ENCODE measurements at regions of chr10 and their contacts with region 1.

Region 1: DNA sequence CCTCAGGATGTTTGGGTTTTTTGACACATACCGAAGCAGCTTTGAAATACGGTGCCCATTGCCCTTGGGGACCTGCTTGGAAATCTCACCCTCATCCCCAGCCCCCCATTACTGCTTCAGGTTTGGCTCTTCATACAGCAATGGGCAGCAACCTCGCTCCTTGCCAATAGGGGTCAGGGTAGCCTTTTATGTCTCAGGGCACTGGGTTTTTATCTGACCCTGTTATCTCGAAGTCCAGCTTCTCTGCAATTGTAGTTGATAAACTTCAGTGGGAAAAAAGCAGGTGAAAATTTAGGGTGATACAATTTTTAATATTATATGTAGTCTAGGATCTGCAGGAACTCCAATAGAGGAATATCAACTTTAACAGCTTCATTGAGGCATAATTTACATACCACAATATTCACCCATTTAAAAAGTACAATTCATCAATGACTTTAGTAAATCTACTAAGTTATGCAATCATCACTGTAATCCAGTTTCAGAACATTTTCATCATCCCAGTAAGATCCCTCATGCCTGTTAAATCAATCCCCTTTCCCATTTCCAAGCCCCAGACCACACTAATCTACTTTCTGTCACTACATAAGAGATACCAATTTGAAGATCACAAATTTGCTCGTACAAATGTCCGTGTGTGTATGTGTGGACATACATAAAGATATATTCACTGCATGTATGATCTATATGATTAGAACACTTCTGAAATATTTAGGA is 386.2 kb downstream of the KCNMA1 start:
- DNase-seq: peak; percentile 58
- H3K4me3 ChIP-seq: no peak overlapping the region; a peak in 1 of 4 replicates
- H3K27ac ChIP-seq: no peak overlapping the region
- H3K4me1 ChIP-seq: peaks cover 12 to 16% of the 10 kb centered on the region in 2 experiments; a peak in 3 of 4 replicates
- H3K27me3 ChIP-seq: no peaks in the 10 kb centered on the region
- CTCF ChIP-seq: peak; percentile 86
- EP300 ChIP-seq: no peak
- RAD21 ChIP-seq: peak; percentile 93

Region 2: DNA sequence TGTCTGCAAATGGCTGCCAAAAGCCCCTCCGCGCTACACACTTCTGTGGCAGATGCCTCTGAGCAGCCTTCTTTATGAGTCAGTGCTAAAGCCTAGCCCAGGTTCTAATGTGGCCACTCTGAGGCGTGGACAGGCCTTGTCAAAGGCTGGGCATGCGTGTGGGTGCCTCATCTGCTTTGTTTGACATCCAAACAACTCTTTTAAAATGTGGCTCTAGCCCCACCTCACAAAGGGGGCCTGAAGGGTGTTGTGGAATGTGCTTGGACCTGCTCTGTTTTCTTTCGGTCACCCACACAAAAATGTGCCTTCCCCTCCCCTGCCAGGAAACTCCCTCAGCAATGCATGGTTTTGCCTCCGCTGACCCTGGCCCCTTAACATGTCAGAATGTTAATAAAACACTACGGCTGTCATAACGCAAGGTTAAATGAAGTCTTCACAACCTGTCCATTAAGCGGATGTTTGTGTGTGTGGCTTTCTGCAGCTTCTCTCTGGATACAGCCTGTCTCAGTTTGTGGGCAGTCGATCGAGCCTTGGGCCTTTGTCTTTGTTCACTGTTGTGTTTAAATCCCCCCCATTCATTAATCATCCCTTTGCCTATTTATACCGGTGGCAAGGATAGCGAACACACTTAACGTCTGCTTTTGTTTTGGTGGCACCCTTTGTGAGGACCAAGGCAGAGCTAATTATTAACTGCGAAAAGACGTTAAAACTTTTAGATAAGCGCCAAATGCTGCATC is 1101.1 kb before region 1 on chr10:
- CTCF ChIA-PET with region 1: no interaction called
- POLR2A ChIA-PET with region 1: no interaction called
- DNase-seq: no peak
- H3K4me3 ChIP-seq: no peak overlapping the region
- H3K27ac ChIP-seq: no peak overlapping the region
- H3K4me1 ChIP-seq: no peaks in the 10 kb centered on the region; a peak in 1 of 4 replicates
- H3K27me3 ChIP-seq: no peaks in the 10 kb centered on the region
- CTCF ChIP-seq: no peak
- EP300 ChIP-seq: no peak
- RAD21 ChIP-seq: no peak

Region 3: GRCh38 chr10:77165445-77166208 is 85.8 kb before region 1 on chr10:
- CTCF ChIA-PET with region 1: interaction called, 25 read pairs
- POLR2A ChIA-PET with region 1: no interaction called
- DNase-seq: peak; percentile 54
- H3K4me3 ChIP-seq: peak overlapping the region in 1 of 2 experiments; percentile 3; a peak in 1 of 4 replicates
- H3K27ac ChIP-seq: peak overlapping the region in 1 of 2 experiments; percentile 96; a peak in 1 of 4 replicates
- H3K4me1 ChIP-seq: peaks cover 25 to 29% of the 10 kb centered on the region in 2 experiments
- H3K27me3 ChIP-seq: no peaks in the 10 kb centered on the region
- CTCF ChIP-seq: peak; percentile 79
- EP300 ChIP-seq: no peak
- RAD21 ChIP-seq: peak; percentile 90

Region 4: GRCh38 chr10:77240041-77240652 is 11.3 kb before region 1 on chr10:
- CTCF ChIA-PET with region 1: interaction called, 38 read pairs
- POLR2A ChIA-PET with region 1: no interaction called
- DNase-seq: no peak
- H3K4me3 ChIP-seq: no peak overlapping the region
- H3K27ac ChIP-seq: peak overlapping the region in 1 of 2 experiments; percentile 60; a peak in 2 of 4 replicates
- H3K4me1 ChIP-seq: peaks cover 19 to 20% of the 10 kb centered on the region in 2 experiments; a peak in 3 of 4 replicates
- H3K27me3 ChIP-seq: no peaks in the 10 kb centered on the region
- CTCF ChIP-seq: no peak
- EP300 ChIP-seq: no peak
- RAD21 ChIP-seq: no peak

Region 5: DNA sequence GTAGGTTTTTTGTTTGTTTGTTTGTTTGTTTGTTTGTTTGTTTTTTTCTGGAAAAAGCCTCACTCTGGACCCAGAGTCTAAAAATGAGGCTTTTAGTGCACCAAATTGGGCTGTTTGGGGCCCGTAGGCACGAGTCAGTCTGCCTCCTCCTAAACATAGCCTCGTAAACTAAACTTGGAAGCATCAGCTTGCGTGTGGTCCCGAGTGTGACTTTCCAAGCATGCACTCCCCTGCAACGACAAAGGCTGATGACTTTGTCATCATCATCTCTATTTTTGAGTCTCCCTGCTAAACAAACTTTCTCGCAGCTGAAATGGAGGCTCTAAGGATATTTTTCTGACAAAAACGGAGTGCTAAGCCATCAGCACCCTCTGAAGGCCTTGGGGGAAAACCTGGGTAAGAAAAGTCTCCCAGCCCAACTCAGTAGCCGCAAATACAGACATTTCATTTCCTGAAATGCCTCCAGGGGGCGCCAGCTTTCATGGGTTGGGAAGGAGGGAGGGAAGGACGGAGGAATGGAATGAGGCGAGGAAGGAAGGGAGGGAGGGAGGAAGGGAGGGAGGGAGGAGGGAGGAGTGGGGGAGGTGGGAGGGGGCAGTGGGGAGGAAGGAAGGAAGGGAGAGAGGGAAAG is 140.3 kb after region 1 on chr10:
- CTCF ChIA-PET with region 1: interaction called, 16 read pairs
- POLR2A ChIA-PET with region 1: no interaction called
- DNase-seq: peak; percentile 66
- H3K4me3 ChIP-seq: no peak overlapping the region
- H3K27ac ChIP-seq: peak overlapping the region; percentile 78 to 95
- H3K4me1 ChIP-seq: peaks cover 49 to 57% of the 10 kb centered on the region in 2 experiments
- H3K27me3 ChIP-seq: no peaks in the 10 kb centered on the region
- CTCF ChIP-seq: peak; percentile 75
- EP300 ChIP-seq: no peak; a peak in 1 of 4 replicates
- RAD21 ChIP-seq: peak; percentile 78

Region 6: GRCh38 chr10:77605466-77605865 is 354.0 kb after region 1 on chr10:
- CTCF ChIA-PET with region 1: interaction called, 10 read pairs
- POLR2A ChIA-PET with region 1: no interaction called
- DNase-seq: peak; percentile 53
- H3K4me3 ChIP-seq: no peak overlapping the region
- H3K27ac ChIP-seq: no peak overlapping the region
- H3K4me1 ChIP-seq: peaks cover 6 to 21% of the 10 kb centered on the region in 2 experiments; a peak in 2 of 4 replicates
- H3K27me3 ChIP-seq: no peaks in the 10 kb centered on the region
- CTCF ChIP-seq: peak; percentile 41
- EP300 ChIP-seq: no peak
- RAD21 ChIP-seq: peak; percentile 71

Region 7: DNA sequence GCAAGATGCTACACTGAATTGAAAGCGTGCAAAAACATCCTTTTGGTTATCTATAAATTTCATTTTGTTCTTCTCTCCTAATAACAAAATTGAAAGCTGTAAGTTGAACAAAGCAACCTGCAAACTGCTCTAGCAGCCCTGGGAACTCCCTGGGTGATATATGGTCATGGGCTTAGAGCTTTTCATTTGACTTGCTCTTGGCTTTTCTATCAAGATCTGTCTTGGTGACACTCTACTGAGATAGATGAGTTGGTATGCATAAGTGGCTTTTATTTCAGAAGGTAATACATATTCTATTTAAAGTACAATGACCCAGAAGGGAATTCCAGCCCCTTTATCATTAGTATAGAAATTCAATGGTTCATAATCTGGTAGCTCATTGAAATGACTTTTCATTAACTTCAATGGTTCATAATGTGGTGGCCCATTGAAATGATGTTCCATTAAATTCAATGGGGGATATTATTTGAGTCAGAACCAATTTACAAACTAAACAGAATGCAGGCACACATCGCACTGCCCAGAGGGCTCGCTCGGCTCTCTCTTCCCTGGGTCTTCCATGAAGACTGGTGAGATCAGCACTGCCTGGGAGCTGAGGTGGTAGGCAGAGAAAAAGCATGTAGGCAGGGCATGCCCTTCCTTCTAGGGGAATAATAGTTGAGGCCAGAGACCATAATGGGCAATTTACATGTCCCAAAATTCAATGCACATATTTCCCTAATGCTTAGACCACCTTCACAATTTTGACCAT is 396.3 kb after region 1 on chr10:
- CTCF ChIA-PET with region 1: interaction called, 140 read pairs
- POLR2A ChIA-PET with region 1: no interaction called
- DNase-seq: no peak
- H3K4me3 ChIP-seq: no peak overlapping the region
- H3K27ac ChIP-seq: no peak overlapping the region
- H3K4me1 ChIP-seq: no peaks in the 10 kb centered on the region
- H3K27me3 ChIP-seq: no peaks in the 10 kb centered on the region
- CTCF ChIP-seq: no peak
- EP300 ChIP-seq: no peak
- RAD21 ChIP-seq: no peak